ENCODE measurements at regions of chr10 and their contacts with region 1.

Region 1: GRCh38 chr10:74826142-74827044 is at the start of gene KAT6B:
- DNase-seq: peak; percentile 100
- ATAC-seq: peak; percentile 73
- H3K4me3 ChIP-seq: peak within 1 kb of the TSS; percentile 74
- H3K27ac ChIP-seq: peak within 1 kb of the TSS; percentile 79
- H3K4me1 ChIP-seq: peaks cover 53% of the 10 kb centered on the region
- H3K27me3 ChIP-seq: no peaks in the 10 kb centered on the region
- CTCF ChIP-seq: peak; percentile 61
- total RNA-seq, gene KAT6B: 83.0 and 94.5 TPM in 2 replicates

Region 2: GRCh38 chr10:73717556-73717955 is 1108.8 kb before region 1 on chr10:
- CTCF ChIA-PET with region 1: no interaction called
- POLR2A ChIA-PET with region 1: no interaction called
- intact Hi-C with region 1: no loop called
- DNase-seq: no peak
- ATAC-seq: no peak
- H3K4me3 ChIP-seq: no peak overlapping the region
- H3K27ac ChIP-seq: no peak overlapping the region
- H3K4me1 ChIP-seq: no peaks in the 10 kb centered on the region
- H3K27me3 ChIP-seq: no peaks in the 10 kb centered on the region
- CTCF ChIP-seq: no peak

Region 3: DNA sequence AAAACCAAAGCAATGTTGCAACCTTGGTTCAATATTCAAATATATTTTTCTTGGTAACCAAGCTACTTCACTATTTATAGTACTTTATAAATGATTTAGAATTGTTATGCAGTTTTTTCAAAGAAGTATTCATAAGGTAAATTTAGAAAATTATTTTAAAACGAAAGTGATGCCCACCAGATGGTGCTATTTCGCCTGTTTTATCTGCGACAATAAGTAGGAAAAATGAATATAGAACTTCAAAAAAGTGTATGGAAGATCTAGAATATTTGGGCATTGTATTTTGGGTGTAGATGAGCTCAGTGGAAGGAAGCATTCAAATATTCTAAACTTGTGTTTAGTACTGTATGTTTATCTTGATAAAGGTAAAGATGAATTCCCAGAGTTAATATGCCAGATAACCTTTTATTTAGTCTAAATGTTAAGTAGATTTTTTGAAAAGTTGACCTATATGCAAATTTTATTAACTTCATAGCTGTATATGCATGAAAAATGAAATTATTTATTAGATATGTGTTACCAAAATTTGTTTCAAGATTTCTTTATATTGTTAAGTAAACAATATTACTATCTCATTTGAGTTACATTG is 582.2 kb before region 1 on chr10:
- CTCF ChIA-PET with region 1: no interaction called
- POLR2A ChIA-PET with region 1: no interaction called
- intact Hi-C with region 1: loop called (anchors 1 kb)
- DNase-seq: peak; percentile 99
- ATAC-seq: peak; percentile 20; the same call in 1 of the 2 replicates
- H3K4me3 ChIP-seq: no peak overlapping the region
- H3K27ac ChIP-seq: no peak overlapping the region
- H3K4me1 ChIP-seq: no peaks in the 10 kb centered on the region
- H3K27me3 ChIP-seq: no peaks in the 10 kb centered on the region
- CTCF ChIP-seq: peak; percentile 100

Region 4: GRCh38 chr10:74502963-74503608 is 323.3 kb before region 1 on chr10:
- CTCF ChIA-PET with region 1: no interaction called
- POLR2A ChIA-PET with region 1: no interaction called
- intact Hi-C with region 1: loop called (anchors 1 kb)
- DNase-seq: peak; percentile 100
- ATAC-seq: peak; percentile 88
- H3K4me3 ChIP-seq: 0 out of 2 replicates have a peak overlapping the region, but pooled peaks have one; percentile 1
- H3K27ac ChIP-seq: peak overlapping the region; percentile 69
- H3K4me1 ChIP-seq: peaks cover 44% of the 10 kb centered on the region
- H3K27me3 ChIP-seq: no peaks in the 10 kb centered on the region
- CTCF ChIP-seq: no peak

Region 5: GRCh38 chr10:74683621-74684364 is 142.6 kb before region 1 on chr10:
- CTCF ChIA-PET with region 1: no interaction called
- POLR2A ChIA-PET with region 1: no interaction called
- intact Hi-C with region 1: loop called (anchors 5 kb)
- DNase-seq: peak; percentile 62
- ATAC-seq: peak; percentile 94
- H3K4me3 ChIP-seq: no peak overlapping the region
- H3K27ac ChIP-seq: no peak overlapping the region
- H3K4me1 ChIP-seq: peaks cover 5% of the 10 kb centered on the region
- H3K27me3 ChIP-seq: no peaks in the 10 kb centered on the region
- CTCF ChIP-seq: no peak

Region 6: GRCh38 chr10:74786088-74786487 is 40.3 kb before region 1 on chr10:
- CTCF ChIA-PET with region 1: no interaction called
- POLR2A ChIA-PET with region 1: no interaction called
- intact Hi-C with region 1: no loop called
- DNase-seq: peak; percentile 90
- ATAC-seq: peak; percentile 86
- H3K4me3 ChIP-seq: no peak overlapping the region
- H3K27ac ChIP-seq: no peak overlapping the region
- H3K4me1 ChIP-seq: peaks cover 9% of the 10 kb centered on the region
- H3K27me3 ChIP-seq: no peaks in the 10 kb centered on the region
- CTCF ChIP-seq: no peak

Region 7: GRCh38 chr10:74875952-74876351 is 49.6 kb after region 1 on chr10:
- CTCF ChIA-PET with region 1: interaction called, 4 read pairs
- POLR2A ChIA-PET with region 1: interaction called, 5 read pairs
- intact Hi-C with region 1: loop called (anchors 1 kb)
- DNase-seq: peak; percentile 99
- ATAC-seq: peak; percentile 92
- H3K4me3 ChIP-seq: peak overlapping the region; percentile 1; the same call in 1 of the 2 replicates
- H3K27ac ChIP-seq: peak overlapping the region; percentile 67
- H3K4me1 ChIP-seq: peaks cover 56% of the 10 kb centered on the region
- H3K27me3 ChIP-seq: no peaks in the 10 kb centered on the region
- CTCF ChIP-seq: no peak

Region 8: GRCh38 chr10:75019370-75019769 is 193.0 kb after region 1 on chr10:
- CTCF ChIA-PET with region 1: interaction called, 5 read pairs
- POLR2A ChIA-PET with region 1: no interaction called
- intact Hi-C with region 1: loop called (anchors 1 kb)
- DNase-seq: peak; percentile 88
- ATAC-seq: peak; percentile 20; the same call in 1 of the 2 replicates
- H3K4me3 ChIP-seq: no peak overlapping the region
- H3K27ac ChIP-seq: no peak overlapping the region
- H3K4me1 ChIP-seq: peaks cover 14% of the 10 kb centered on the region
- H3K27me3 ChIP-seq: no peaks in the 10 kb centered on the region
- CTCF ChIP-seq: peak; percentile 98

Region 9: DNA sequence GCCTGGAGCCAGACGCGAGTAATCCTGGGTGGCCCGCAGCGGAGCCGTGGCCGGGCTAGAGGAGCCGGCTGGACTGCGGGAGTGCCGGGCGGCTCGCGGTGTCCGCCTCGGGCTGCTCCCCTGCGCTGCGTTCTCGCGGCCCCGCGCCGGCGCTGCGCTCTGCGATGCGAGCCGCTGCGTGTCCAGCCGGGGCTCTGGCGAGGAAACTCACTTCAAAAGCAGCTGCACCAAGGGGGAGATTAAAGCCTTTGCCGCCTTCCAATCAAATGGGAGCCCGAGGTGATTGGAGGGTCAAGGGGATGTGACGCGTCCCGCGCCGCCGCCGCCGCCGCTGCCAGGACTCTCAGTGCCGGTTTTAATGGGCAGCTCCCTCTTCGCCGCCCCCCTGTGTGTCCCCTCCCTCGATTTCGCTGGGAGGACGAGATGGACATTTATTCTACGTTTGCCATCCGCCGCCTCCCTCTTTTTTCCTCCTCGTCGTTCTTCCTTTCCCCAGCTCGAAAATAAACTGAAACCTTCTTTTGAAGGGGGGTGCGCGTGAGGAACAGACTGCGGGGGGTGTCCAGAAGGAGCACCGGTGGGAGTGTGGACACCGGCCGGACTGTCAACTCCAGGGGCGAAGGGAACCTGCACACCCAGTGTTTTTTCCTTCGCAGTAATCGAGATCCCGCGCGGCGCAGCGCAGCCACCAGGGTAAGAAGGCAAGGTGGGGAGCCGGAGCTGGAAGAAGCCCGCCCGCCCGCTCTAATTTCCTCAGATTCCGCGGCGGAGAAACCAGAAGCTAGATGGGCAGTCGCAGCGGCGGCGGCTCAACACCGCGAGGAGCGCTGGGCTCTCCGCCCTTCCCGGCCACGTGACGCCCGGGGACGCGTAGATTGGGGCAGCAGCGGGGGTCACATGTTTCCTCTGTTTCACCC is 575.4 kb after region 1 on chr10 and contains the start of gene ZNF503:
- CTCF ChIA-PET with region 1: no interaction called
- POLR2A ChIA-PET with region 1: no interaction called
- intact Hi-C with region 1: loop called (anchors 10 kb)
- DNase-seq: peak; percentile 100
- ATAC-seq: peak; percentile 39
- H3K4me3 ChIP-seq: peak within 1 kb of the TSS; percentile 79
- H3K27ac ChIP-seq: peak within 1 kb of the TSS; percentile 81
- H3K4me1 ChIP-seq: peaks cover 15% of the 10 kb centered on the region
- H3K27me3 ChIP-seq: peaks cover 96% of the 10 kb centered on the region
- CTCF ChIP-seq: 0 out of 2 replicates have a peak, but pooled peaks have one; percentile 24
- total RNA-seq, gene ZNF503: 42.3 and 72.1 TPM in 2 replicates